ENCODE measurements at regions of chr9 and their contacts with region 1.

Region 1: DNA sequence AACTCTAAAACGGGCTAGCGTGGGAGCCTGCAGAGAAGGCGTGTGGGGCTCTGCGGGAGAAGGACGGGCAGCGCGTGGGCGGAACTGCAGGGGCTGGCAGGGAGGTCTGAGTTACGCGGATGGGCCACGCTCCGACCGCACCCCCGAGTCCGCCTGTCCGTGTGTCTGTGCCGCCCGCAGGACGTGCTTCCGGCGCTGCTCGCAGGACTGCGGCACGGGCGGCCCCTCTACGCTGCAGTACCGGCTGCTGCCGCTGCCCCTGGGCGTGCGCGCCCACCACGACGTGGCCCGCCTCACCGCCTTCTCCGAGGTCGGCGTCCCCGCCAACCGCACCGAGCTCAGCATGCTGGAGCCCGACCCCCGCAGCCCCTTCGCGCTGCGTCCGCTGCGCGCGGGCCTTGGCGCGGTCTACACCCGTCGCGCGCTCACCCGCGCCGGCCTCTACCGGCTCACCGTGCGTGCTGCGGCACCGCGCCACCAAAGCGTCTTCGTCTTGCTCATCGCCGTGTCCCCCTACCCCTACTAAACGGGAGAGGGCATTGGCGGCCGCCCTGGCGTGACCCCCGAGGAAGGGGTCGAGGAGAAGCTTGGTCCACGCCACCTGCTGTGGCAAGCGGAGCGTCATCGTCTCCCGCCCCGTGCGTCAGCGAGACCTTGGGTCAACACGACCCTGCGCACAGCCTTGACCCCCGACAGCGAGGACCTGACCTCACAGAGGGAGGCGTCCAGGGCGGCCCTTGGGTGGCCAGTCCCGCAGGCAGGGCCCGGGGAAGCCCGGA is 11.4 kb upstream of the ASS1 start:
- DNase-seq: peak; percentile 76
- ATAC-seq: peak; percentile 88
- H3K4me3 Mint-ChIP-seq: peak overlapping the region; percentile 65
- H3K27ac Mint-ChIP-seq: no peak overlapping the region
- H3K4me1 Mint-ChIP-seq: peaks cover 12% of the 10 kb centered on the region; the same call in 1 of the 2 replicates
- H3K27me3 Mint-ChIP-seq: peaks cover 35% of the 10 kb centered on the region
- CTCF ChIP-seq: peak; percentile 65

Region 2: DNA sequence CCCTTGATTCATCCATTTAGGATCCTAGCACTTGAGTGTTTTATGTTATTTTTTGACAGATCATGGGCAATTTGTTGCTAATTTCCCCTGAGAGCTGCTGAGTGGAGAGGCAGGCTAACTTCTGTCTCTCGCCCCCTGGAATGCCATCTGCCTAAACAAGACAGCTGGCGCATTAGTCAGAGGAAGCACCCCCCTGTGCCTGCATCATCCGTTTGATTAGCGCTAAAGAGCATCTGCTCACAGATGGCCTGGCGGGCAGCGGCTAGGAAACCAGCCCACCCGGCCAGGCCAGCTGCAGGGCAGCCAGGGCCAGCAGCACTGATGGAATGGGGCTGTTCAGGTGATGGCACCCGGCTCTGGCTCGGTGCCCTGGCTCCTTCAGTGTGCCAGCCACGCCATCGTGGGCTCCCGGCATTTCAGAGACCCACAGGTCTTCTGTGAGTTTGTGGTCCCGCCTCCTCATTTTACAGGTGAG is 11.5 kb before region 1 on chr9:
- CTCF ChIA-PET with region 1: interaction called, 20 read pairs
- POLR2A ChIA-PET with region 1: no interaction called
- DNase-seq: peak; percentile 47
- ATAC-seq: peak; percentile 64
- H3K4me3 Mint-ChIP-seq: no peak overlapping the region
- H3K27ac Mint-ChIP-seq: peak overlapping the region; percentile 12; the same call in 1 of the 2 replicates
- H3K4me1 Mint-ChIP-seq: peaks cover 23% of the 10 kb centered on the region
- H3K27me3 Mint-ChIP-seq: no peaks in the 10 kb centered on the region
- CTCF ChIP-seq: no peak

Region 3: DNA sequence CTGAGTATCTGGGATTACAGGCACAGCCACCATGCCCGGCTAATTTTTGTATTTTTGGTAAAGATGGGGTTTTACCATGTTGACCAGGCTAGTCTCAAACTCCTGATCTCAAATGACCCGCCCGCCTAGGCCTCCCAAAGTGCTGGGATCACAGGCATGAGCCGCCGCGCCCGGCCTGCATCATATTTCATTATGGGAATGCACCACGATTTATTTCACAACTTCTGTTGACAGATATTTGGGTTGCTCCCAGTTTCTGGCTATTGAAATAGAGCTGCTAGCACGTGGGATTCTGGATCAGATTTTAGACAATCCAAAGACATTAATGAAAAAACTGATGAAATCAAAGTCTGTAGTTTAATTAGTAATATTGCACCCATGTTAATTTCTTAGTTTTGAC is 97.6 kb after region 1 on chr9:
- CTCF ChIA-PET with region 1: no interaction called
- POLR2A ChIA-PET with region 1: no interaction called
- DNase-seq: no peak
- ATAC-seq: no peak
- H3K4me3 Mint-ChIP-seq: no peak overlapping the region
- H3K27ac Mint-ChIP-seq: no peak overlapping the region
- H3K4me1 Mint-ChIP-seq: peaks cover 23% of the 10 kb centered on the region
- H3K27me3 Mint-ChIP-seq: peaks cover 5% of the 10 kb centered on the region; the same call in 1 of the 2 replicates
- CTCF ChIP-seq: no peak